ENCODE measurements at regions of chr12 and their contacts with region 1.

Region 1: DNA sequence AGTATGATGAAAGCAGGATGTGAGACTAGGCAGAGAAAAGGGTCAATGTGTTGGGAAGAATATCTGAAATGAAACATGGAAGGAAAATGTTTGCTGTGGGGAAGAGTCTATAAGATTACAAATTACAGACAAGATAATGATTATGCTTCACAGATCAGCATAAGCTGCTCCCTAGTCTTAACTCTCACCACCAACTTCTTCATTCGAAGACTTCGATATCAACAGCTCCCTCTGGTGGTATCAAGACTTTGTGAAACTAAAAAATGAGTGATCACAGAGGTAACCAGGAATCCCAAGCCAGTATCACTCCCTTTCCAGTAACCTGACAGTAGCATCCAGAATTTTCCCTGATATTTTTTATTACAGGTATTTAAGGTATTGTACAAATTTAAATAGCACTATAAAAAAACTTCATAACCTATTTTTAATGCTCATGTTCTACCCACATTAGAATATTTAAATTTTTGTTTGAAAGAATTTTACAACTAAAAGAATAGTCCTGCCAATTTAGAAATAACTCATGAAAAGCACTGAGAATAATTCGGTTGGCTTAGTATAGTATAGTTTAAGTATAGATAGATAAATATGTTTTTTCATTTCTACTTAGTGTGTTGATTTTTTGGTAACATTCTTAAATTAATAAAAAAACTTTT is 84.4 kb downstream of the C2CD5 start:
- DNase-seq: peak in 3 of 35 experiments; percentile 9 to 66 (median 19)
- ATAC-seq: peak in 3 of 4 experiments; percentile 41 to 62 (median 52)
- H3K4me3 ChIP-seq: no peak overlapping the region
- H3K4me3 Mint-ChIP-seq: no peak overlapping the region
- H3K27ac ChIP-seq: no peak overlapping the region
- H3K27ac Mint-ChIP-seq: no peak overlapping the region
- H3K4me1 ChIP-seq: no peaks in the 10 kb centered on the region
- H3K4me1 Mint-ChIP-seq: no peaks in the 10 kb centered on the region
- H3K27me3 ChIP-seq: no peaks in the 10 kb centered on the region
- H3K27me3 Mint-ChIP-seq: no peaks in the 10 kb centered on the region

Region 2: DNA sequence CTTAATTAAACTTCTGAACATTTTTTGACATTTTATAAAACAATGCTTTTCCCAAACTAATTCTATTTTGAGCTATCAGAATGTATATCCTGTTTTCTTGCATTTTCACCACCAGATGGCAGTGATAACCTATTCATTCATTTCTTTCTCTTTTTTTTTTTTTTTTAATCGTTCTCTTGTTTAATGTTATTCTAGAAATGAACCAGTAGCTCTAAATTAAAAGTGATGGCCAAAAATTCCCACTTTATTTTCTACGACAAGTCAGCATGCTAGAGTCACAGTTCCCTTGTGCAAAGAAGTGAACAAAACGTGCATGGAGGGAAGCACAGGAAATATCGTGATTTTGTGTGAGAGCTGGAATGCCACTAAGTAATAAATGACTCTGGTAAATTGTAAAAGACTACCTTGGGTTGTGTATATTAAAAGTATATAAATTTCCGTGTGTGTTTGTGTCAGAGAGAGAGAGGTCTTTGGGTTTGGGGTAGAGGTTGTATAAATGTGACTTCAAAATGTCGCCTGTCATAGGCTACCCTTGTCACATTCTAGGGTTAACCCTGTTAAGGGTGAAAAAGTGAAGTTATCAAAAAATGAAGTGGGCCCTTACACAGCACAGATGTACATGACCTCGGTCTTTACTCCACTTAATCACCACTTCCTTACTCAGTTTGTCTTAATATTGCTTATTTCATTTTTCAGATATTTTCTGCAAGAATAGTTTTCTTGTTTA is 761.9 kb before region 1 on chr12:
- CTCF ChIA-PET with region 1: interaction called, 4 to 29 read pairs
- POLR2A ChIA-PET with region 1: no interaction called
- DNase-seq: peak in 1 of 35 experiments; percentile 68
- ATAC-seq: no peak
- H3K4me3 ChIP-seq: no peak overlapping the region
- H3K4me3 Mint-ChIP-seq: no peak overlapping the region
- H3K27ac ChIP-seq: no peak overlapping the region
- H3K27ac Mint-ChIP-seq: no peak overlapping the region
- H3K4me1 ChIP-seq: peaks cover 0 to 2% of the 10 kb centered on the region in 2 experiments
- H3K4me1 Mint-ChIP-seq: peaks cover 7 to 14% (median 13%) of the 10 kb centered on the region in 3 donors
- H3K27me3 ChIP-seq: no peaks in the 10 kb centered on the region
- H3K27me3 Mint-ChIP-seq: peaks cover 0 to 3% of the 10 kb centered on the region in 2 donors

Region 3: GRCh38 chr12:22083167-22083566 is 376.8 kb before region 1 on chr12:
- CTCF ChIA-PET with region 1: interaction called, 38 to 39 read pairs
- POLR2A ChIA-PET with region 1: interaction called in 1 of 2 experiments, 4 read pairs
- DNase-seq: peak in 16 of 35 experiments; percentile 10 to 70 (median 22)
- ATAC-seq: peak in 2 of 4 experiments; percentile 41 to 49
- H3K4me3 ChIP-seq: no peak overlapping the region
- H3K4me3 Mint-ChIP-seq: no peak overlapping the region
- H3K27ac ChIP-seq: no peak overlapping the region
- H3K27ac Mint-ChIP-seq: no peak overlapping the region
- H3K4me1 ChIP-seq: no peaks in the 10 kb centered on the region
- H3K4me1 Mint-ChIP-seq: no peaks in the 10 kb centered on the region
- H3K27me3 ChIP-seq: no peaks in the 10 kb centered on the region
- H3K27me3 Mint-ChIP-seq: no peaks in the 10 kb centered on the region

Region 4: DNA sequence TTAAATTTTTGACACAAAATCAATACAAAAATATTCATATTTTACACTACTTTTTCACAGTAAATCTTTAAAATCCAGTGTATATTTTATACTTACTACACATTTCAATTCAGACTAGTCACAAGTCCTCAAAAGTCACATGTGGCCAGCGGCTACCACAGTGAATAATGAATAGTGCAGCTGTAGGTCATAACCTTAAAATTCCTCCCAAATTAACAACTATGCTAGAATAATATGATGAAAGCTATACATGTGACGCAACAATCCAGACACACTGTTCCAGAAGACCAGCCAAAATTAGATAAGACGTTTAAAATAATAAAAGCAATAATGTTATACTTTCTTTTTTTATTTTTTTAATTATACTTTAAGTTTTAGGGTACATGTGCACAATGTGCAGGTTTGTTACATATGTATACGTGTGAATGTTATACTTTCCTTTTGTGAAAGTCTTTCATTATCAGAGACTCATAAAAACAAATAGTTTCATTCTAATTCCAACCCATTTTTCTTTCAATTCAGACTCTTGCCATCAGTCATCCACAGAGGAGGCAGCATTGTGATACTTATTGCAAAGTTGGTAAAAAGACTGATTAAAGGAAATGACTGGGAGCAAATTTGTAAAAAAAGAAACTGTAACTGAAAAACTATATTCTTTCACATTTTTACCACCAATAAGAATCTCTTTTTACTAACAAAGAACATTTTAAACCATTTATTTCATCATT is 17.4 kb after region 1 on chr12:
- CTCF ChIA-PET with region 1: interaction called, 3 to 13 read pairs
- POLR2A ChIA-PET with region 1: no interaction called
- DNase-seq: no peak
- ATAC-seq: no peak
- H3K4me3 ChIP-seq: no peak overlapping the region
- H3K4me3 Mint-ChIP-seq: no peak overlapping the region
- H3K27ac ChIP-seq: no peak overlapping the region
- H3K27ac Mint-ChIP-seq: no peak overlapping the region
- H3K4me1 ChIP-seq: peaks cover 0 to 5% of the 10 kb centered on the region in 2 experiments
- H3K4me1 Mint-ChIP-seq: peaks cover 9 to 21% (median 12%) of the 10 kb centered on the region in 3 donors
- H3K27me3 ChIP-seq: no peaks in the 10 kb centered on the region
- H3K27me3 Mint-ChIP-seq: no peaks in the 10 kb centered on the region